GM10248 (cell line): ENCODE measurements at regions of chr7 and their contacts with region 1.

Region 1: DNA sequence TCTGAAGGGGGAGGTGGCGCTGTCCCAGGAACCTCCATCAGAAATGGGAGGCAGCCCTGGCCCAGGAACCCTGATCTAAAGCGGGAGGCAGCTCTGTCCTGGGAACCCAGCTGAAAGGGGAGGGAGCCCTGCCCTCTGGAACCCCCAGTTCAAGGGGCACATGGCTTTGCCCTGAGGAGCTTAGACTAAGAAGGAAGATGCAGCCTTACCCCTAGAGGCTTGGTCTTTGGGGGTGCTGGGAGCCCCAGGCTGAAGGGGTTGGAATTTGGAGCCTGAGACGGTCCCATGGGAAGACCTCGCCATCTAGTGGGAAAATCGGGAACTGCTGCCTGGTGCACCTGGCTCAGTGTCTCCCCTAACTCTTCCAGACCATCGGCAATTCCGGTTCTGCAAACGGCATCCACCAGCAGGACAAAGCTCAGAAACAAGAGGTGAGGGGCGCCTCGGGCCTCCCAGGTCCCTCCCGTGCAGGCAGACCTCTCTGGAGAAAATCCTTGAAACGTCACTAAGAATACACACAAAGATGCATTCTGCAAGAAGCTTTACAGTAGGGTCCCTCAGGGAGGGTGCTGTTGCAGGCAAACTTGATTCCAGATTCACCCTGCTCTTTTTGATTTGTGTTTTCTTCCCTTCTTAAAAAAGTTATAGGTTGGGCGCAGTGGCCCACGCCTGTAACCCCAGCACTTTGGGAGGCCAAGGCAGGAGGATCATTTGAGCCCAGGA is 52.4 kb upstream of the GTF2IRD1 start:
- DNase-seq: peak; percentile 82
- CTCF ChIP-seq: peak; percentile 90

Region 2: DNA sequence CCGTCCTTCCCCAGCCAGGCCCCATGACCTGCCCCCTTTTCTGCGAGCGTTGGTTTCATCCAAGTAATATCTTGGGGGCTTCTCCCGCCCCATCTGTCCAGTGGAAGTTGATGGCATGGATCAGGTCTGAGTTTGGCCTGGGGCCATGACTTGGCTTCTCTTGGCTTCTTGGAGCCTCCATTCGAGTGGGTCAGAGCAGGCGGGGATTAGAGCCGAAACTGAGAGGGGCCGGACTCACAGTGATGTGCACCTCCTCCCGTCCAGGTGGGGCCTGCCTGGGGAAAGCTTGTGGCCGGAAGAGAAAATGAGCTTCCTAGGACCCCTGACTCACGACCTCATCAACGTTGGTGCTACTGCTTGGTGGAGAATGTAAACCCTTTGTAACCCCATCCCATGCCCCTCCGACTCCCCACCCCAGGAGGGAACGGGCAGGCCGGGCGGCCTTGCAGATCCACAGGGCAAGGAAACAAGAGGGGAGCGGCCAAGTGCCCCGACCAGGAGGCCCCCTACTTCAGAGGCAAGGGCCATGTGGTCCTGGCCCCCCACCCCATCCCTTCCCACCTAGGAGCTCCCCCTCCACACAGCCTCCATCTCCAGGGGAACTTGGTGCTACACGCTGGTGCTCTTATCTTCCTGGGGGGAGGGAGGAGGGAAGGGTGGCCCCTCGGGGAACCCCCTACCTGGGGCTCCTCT is 332.8 kb before region 1 on chr7:
- CTCF ChIA-PET with region 1: interaction called, 101 read pairs
- POLR2A ChIA-PET with region 1: no interaction called
- DNase-seq: no peak
- CTCF ChIP-seq: no peak

Region 3: GRCh38 chr7:74197449-74198124 is 203.7 kb before region 1 on chr7:
- CTCF ChIA-PET with region 1: interaction called, 197 read pairs
- POLR2A ChIA-PET with region 1: interaction called, 3 read pairs
- DNase-seq: no peak
- CTCF ChIP-seq: no peak

Region 4: DNA sequence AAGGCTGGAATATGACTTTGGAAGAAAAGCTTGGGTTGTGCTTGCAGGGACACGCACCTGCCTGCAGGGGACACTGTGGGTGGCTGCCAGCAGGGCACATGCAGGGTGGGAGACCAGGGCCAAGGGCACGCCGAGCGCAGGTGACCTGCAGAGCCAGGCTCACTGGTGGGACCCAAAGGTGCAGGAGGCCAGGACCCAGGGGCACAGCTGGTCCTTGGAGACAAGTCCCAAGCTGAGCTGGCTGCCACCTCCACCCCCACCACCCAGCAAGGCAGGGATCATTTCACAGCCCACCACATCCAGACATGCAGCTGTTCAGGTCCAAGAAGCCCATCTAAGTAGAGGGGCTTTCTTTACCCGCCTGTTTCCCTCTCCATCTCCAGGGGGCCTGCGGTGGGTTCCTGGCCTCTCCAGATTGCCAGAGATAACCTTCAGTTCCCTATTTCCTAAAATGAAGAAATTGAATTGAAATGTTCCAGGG is 125.9 kb before region 1 on chr7:
- CTCF ChIA-PET with region 1: interaction called, 11 read pairs
- POLR2A ChIA-PET with region 1: no interaction called
- DNase-seq: no peak
- CTCF ChIP-seq: peak; percentile 58

Region 5: GRCh38 chr7:74376256-74377036 is 24.9 kb before region 1 on chr7:
- CTCF ChIA-PET with region 1: interaction called, 14 read pairs
- POLR2A ChIA-PET with region 1: no interaction called
- DNase-seq: no peak
- CTCF ChIP-seq: no peak

Region 6: GRCh38 chr7:74412056-74412455 is 10.8 kb after region 1 on chr7:
- CTCF ChIA-PET with region 1: interaction called, 41 read pairs
- POLR2A ChIA-PET with region 1: no interaction called
- DNase-seq: no peak
- CTCF ChIP-seq: no peak

Region 7: DNA sequence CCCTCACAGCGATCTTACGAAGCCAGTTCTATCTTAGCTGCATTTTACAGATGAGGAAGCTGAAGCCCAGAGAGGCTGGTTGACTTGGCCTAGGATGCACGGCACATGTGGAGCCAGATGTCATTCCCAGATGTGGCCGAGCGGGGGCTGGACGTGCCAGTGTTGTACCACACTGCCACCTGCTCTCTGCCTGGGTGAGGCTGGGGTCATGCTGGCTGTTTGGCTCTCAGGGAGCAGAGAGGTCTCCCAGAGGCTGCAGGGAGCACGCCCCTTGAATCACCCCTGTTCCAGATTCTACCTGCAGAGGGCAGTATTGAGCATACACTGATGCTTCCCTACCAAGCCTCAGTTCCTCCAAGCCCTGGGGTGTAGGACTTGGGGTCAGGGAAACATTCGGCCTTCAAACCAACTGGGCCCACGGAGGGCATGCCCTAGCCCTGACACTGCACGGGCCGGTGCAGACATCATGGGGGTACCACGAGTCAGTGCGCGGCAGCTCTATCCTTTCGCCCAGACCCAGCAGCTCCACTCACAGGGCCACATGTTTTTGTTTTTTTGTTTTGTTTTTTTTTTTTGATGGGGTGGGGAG is 48.6 kb after region 1 on chr7:
- CTCF ChIA-PET with region 1: no interaction called
- POLR2A ChIA-PET with region 1: no interaction called
- DNase-seq: peak; percentile 84
- CTCF ChIP-seq: peak; percentile 67

Region 8: DNA sequence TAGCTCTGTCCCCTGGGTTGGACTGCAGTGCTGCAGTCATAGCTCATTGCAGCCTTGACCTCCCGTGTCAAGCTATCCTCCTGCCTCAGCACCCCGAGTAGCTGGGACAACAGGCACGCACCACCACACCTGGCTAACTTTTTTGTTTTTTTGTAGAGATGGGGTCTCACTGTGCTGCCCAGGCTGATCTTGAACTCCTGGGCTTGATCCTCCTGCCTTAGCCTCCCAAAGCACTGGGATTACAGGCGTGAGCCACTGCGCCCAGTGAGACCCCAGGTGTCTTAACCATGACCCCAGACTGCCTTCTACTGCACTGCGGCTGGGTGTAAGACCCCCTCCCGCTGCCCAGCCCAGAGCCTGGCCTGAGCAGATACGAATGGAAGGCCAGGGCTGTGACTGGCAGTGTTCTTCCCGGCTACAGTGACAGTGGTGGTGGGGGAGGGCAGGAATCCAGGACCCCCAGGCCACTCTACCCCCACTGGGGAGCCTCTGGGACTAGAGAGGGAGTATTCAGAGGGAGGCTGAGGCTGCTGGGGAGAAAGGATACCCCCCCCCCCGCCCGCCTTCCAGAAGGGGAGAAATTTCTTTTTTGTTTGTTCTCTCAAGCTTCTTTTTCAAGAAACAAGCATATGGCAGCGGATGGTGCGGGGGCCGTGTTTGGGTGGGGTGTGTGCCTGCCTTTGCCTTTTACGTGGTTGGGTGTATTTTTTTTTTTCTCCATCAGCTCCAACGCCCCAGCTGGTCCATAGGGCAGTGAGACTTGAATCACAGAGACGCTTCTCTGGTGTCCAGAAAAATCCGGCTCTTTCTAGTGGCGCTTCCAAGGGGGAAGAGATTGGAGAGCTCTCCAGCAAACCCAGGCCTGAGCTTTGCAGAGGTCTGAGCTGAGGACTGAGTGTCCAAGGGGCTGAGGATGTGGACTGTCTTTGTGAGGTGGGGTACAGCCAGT is 89.0 kb after region 1 on chr7:
- CTCF ChIA-PET with region 1: no interaction called
- POLR2A ChIA-PET with region 1: no interaction called
- DNase-seq: no peak
- CTCF ChIP-seq: no peak